GM12878 (cell line): ENCODE measurements at regions of chr15 and their contacts with region 1.

Region 1: DNA sequence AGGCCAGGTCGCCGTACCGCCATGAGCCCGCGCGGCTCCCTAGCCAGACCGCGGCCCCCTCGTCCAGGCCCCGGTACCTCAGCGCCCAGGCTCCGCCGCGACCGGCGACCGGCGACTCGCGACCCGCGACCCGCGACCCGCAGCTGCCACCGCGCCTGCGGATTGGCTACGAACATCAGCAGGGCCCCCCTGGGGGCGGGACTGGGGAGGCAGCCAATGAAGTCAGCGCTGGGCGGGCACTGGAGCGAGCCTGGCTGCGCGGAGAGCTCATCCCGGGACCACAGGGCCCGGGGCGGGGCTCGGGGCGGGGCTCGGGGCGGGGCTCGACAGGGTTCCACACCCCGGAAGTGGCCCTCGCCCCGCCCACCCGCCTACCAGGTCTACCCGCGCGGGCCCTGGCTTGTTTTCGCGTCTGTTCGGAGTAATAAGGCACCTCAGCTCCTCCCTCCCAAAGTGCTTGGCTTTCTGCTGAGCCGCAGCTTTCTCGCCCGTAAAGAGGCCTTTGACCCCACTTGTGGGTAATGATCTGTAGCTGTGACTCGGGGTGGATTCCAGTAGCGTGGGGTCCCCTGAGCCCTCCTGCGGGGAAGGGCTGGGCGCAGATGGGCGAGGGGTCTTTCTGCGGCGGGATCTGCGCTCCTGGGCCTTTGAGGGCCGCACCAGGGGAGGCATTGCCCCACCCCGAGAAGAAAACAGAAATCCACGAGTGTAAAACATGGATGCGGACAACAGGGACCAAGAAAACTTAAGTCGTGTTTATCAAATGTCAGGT is at the start of gene LYSMD4:
- DNase-seq: peak; percentile 58
- ATAC-seq: peak; percentile 100
- H3K4me3 ChIP-seq: peak within 1 kb of the TSS; percentile 84
- H3K27ac ChIP-seq: peak within 1 kb of the TSS; percentile 67
- H3K4me1 ChIP-seq: no peaks in the 10 kb centered on the region
- H3K27me3 ChIP-seq: no peaks in the 10 kb centered on the region
- CTCF ChIP-seq: no peak
- EP300 ChIP-seq: no peak
- POLR2A ChIP-seq: peak; percentile 83
- RAD21 ChIP-seq: no peak
- polyA plus RNA-seq, gene LYSMD4: 1.8 to 5.2 TPM

Region 2: DNA sequence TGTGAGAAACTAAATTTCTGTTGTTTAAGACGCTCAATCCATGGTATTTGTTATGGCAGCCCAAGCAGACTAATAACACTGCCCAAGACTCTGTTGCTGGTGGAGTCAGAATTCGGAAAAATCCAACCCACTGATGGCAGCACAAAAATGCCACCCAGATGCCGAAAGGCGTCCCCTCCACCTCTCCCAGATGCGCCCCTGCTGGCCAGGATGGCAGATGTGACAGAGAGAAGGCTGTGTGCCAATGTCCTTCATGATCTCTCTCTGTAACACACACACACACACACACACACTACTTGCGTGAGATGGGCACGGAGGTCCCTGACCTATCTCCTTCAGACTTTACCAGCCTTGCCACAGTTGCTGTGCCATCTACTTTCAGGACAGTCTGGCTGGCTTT is 10.7 kb after region 1 on chr15:
- CTCF ChIA-PET with region 1: no interaction called
- POLR2A ChIA-PET with region 1: no interaction called
- RAD21 ChIA-PET with region 1: no interaction called
- SMC1A ChIA-PET with region 1: no interaction called
- in situ Hi-C with region 1: no loop called
- intact Hi-C with region 1: no loop called
- DNase-seq: no peak
- ATAC-seq: peak; percentile 39; the same call in 1 of the 3 replicates
- H3K4me3 ChIP-seq: no peak overlapping the region
- H3K27ac ChIP-seq: no peak overlapping the region
- H3K4me1 ChIP-seq: no peaks in the 10 kb centered on the region; the same call in 1 of the 2 replicates
- H3K27me3 ChIP-seq: no peaks in the 10 kb centered on the region
- CTCF ChIP-seq: peak in 2 of 3 experiments; percentile 1 to 17; a peak in 2 of 6 replicates
- EP300 ChIP-seq: no peak
- POLR2A ChIP-seq: no peak
- RAD21 ChIP-seq: no peak

Region 3: GRCh38 chr15:99755692-99756409 is 22.4 kb after region 1 on chr15:
- CTCF ChIA-PET with region 1: interaction called, 15 read pairs
- POLR2A ChIA-PET with region 1: no interaction called
- RAD21 ChIA-PET with region 1: interaction called, 11 read pairs
- SMC1A ChIA-PET with region 1: interaction called, 8 read pairs
- in situ Hi-C with region 1: no loop called
- intact Hi-C with region 1: no loop called
- DNase-seq: peak; percentile 43
- ATAC-seq: peak; percentile 99
- H3K4me3 ChIP-seq: no peak overlapping the region
- H3K27ac ChIP-seq: no peak overlapping the region
- H3K4me1 ChIP-seq: peaks cover 5% of the 10 kb centered on the region
- H3K27me3 ChIP-seq: no peaks in the 10 kb centered on the region
- CTCF ChIP-seq: peak; percentile 80 to 91 (median 88)
- EP300 ChIP-seq: no peak
- POLR2A ChIP-seq: no peak
- RAD21 ChIP-seq: peak; percentile 96